ENCODE measurements at regions of chr13 and their contacts with region 1.

Region 1: GRCh38 chr13:108902557-108903155 is 273.2 kb downstream of the MYO16 start:
- DNase-seq: no peak
- ATAC-seq: no peak
- H3K4me3 ChIP-seq: no peak overlapping the region
- H3K27ac ChIP-seq: no peak overlapping the region
- H3K4me1 ChIP-seq: no peaks in the 10 kb centered on the region
- H3K27me3 ChIP-seq: no peaks in the 10 kb centered on the region
- CTCF ChIP-seq: no peak

Region 2: GRCh38 chr13:108859202-108860012 is 43.2 kb before region 1 on chr13:
- intact Hi-C with region 1: loop called (anchors 5 kb)
- DNase-seq: no peak
- ATAC-seq: peak in 1 of 2 donors; percentile 18
- H3K4me3 ChIP-seq: no peak overlapping the region
- H3K27ac ChIP-seq: no peak overlapping the region
- H3K4me1 ChIP-seq: no peaks in the 10 kb centered on the region
- H3K27me3 ChIP-seq: no peaks in the 10 kb centered on the region
- CTCF ChIP-seq: no peak

Measured in lower lobe of right lung (tissue), 2 donors.